Psoas muscle (tissue), 8 donors: ENCODE measurements at regions of chr2 and their contacts with region 1.

Region 1: DNA sequence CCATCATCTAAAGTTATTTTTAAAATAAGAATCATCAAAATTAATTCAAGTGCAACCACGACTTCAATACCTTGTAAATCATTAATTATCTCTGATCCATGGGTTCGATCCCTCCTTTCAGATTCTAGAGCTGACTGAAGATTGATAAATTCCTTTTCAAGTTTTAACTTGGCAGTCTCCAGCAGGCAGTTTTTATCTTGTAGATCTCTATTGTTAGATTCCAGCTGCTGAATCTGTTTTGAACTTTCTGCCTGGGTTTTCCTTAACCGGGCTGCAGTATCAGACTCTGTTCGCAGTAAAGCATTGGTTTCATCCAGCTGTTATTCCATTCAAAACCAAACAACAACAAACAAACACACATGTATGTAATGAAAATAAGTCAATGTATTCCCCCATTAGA is 59.5 kb downstream of the SLC66A3 start:
- DNase-seq: no peak
- ATAC-seq: no peak
- H3K4me3 ChIP-seq: no peak overlapping the region
- H3K27ac ChIP-seq: no peak overlapping the region
- H3K4me1 ChIP-seq: no peaks in the 10 kb centered on the region
- H3K27me3 ChIP-seq: no peaks in the 10 kb centered on the region
- CTCF ChIP-seq: no peak

Region 2: DNA sequence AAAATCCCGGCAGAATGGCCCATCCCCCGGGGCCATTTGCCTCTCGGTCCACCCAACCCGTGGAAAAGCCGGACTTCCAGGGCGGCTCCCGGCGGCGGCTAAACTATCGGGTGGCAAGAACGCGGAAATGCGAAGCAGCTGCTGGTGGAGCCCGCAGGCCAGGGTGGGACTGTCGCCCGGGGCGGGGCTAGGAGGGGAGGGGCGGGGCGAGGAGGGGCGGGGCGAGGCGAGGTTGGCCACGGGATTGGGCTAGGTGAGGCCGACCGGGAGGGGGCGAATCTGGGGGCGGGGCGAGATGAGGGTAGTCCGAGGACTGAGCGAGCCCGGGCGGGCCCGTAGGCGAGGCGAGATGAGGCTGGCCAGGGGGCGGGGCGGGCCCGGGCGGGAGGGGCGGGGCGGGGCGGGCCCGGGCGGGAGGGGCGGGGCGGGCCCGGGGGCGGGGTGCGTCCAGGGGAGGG is 59.8 kb before region 1 on chr2:
- intact Hi-C with region 1: no loop called
- DNase-seq: peak; percentile 99
- ATAC-seq: peak; percentile 90 to 94 (median 92)
- H3K4me3 ChIP-seq: peak overlapping the region; percentile 78
- H3K27ac ChIP-seq: peak overlapping the region; percentile 87
- H3K4me1 ChIP-seq: peaks cover 10% of the 10 kb centered on the region
- H3K27me3 ChIP-seq: no peaks in the 10 kb centered on the region
- CTCF ChIP-seq: no peak

Region 3: GRCh38 chr2:11179899-11180298 is 34.9 kb before region 1 on chr2:
- intact Hi-C with region 1: loop called in 1 of 2 experiments (anchors 5 kb)
- DNase-seq: no peak
- ATAC-seq: no peak
- H3K4me3 ChIP-seq: no peak overlapping the region
- H3K27ac ChIP-seq: no peak overlapping the region
- H3K4me1 ChIP-seq: no peaks in the 10 kb centered on the region
- H3K27me3 ChIP-seq: no peaks in the 10 kb centered on the region
- CTCF ChIP-seq: no peak

Region 4: DNA sequence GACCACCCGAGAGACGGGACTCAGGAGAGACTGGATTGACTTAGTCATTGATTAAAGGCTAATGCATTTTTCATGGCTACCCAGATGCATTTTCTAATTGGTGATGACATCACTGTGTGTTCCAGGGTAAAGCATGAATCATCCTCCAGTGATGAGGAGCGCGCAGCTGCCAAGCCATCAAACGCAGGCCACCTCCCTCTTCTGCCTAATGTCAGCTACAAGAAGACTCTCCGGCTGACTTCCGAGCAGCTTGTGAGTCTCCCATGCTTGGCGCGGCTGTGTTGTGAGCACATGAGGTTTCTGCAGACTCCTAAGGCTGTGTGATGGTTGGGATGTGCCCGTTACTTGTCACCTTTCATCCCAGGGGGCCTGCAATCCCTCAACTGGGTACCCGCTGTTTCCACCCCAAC is 588.0 kb after region 1 on chr2:
- intact Hi-C with region 1: no loop called
- DNase-seq: no peak
- ATAC-seq: peak in 3 of 4 donors; percentile 50 to 62 (median 59)
- H3K4me3 ChIP-seq: no peak overlapping the region
- H3K27ac ChIP-seq: no peak overlapping the region
- H3K4me1 ChIP-seq: peaks cover 15% of the 10 kb centered on the region
- H3K27me3 ChIP-seq: no peaks in the 10 kb centered on the region
- CTCF ChIP-seq: no peak